GM12878 (cell line): ENCODE measurements at regions of chr16 and their contacts with region 1.

Region 1: GRCh38 chr16:66996324-66996982 is 8.1 kb downstream of the CES4A start:
- DNase-seq: no peak
- ATAC-seq: no peak
- H3K4me3 ChIP-seq: no peak overlapping the region
- H3K27ac ChIP-seq: no peak overlapping the region
- H3K4me1 ChIP-seq: no peaks in the 10 kb centered on the region; the same call in 1 of the 2 replicates
- H3K27me3 ChIP-seq: peaks cover 0 to 1% of the 10 kb centered on the region in 2 experiments; a peak in 2 of 4 replicates
- CTCF ChIP-seq: no peak
- EP300 ChIP-seq: no peak
- POLR2A ChIP-seq: no peak
- RAD21 ChIP-seq: no peak

Region 2: GRCh38 chr16:66934153-66934838 is 62.2 kb before region 1 on chr16 and contains the start of gene CIAO2B:
- CTCF ChIA-PET with region 1: no interaction called
- POLR2A ChIA-PET with region 1: no interaction called
- RAD21 ChIA-PET with region 1: no interaction called
- SMC1A ChIA-PET with region 1: no interaction called
- in situ Hi-C with region 1: loop called (anchors 10 kb)
- intact Hi-C with region 1: no loop called
- DNase-seq: peak; percentile 47
- ATAC-seq: peak; percentile 88
- H3K4me3 ChIP-seq: peak within 1 kb of the TSS; percentile 78
- H3K27ac ChIP-seq: peak within 1 kb of the TSS; percentile 94
- H3K4me1 ChIP-seq: peaks cover 7% of the 10 kb centered on the region
- H3K27me3 ChIP-seq: no peaks in the 10 kb centered on the region
- CTCF ChIP-seq: no peak
- EP300 ChIP-seq: no peak
- POLR2A ChIP-seq: peak; percentile 98
- RAD21 ChIP-seq: no peak
- polyA plus RNA-seq, gene CIAO2B: 101 to 120 TPM

Region 3: DNA sequence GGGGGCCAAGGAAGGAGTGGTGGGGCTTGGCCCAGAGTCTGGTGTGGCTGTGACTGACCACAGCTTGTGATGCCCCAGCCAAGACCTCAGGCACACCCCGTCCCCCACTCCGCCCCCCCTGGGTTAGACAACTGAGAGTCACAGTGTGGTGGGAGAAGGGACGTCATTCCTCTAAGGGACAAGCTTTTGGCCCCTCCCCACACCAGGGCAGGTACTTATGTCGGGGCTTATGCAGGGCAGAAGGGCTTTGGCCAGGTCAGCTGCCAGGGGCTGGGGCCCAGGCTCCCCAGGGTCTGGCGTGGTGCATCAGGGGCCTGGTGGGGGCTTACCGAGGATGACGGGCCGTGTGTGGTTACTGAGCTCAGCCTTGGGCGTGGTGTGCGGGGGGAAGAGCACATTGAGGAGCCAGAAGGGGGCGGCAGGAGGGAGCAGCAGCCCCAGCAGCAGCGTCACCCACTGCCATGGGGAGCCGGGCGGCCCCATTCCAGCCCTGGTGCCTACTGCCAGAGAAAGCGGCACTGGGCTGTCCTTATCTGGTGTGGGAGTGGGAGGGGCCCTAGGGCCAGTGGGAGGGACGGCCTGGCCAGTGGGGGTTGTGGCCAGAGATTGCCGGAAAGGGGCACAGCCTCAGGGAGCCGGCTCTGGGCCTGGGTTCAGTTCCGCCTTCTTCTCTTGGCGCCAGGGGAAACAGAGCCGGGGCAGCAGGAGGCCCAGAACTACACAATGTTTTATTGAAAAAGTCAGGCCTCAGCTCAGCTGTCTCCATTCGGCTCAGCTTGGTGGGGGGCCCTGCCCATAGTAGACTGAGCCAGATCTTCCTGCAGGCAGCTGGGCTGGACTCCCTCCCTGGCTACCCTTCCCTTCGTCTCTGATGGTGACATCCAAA is 947.4 kb after region 1 on chr16 and contains the start of gene LCAT:
- CTCF ChIA-PET with region 1: no interaction called
- POLR2A ChIA-PET with region 1: no interaction called
- RAD21 ChIA-PET with region 1: no interaction called
- SMC1A ChIA-PET with region 1: no interaction called
- in situ Hi-C with region 1: no loop called
- intact Hi-C with region 1: no loop called
- DNase-seq: no peak
- ATAC-seq: no peak
- H3K4me3 ChIP-seq: no peak within 1 kb of the TSS
- H3K27ac ChIP-seq: no peak within 1 kb of the TSS
- H3K4me1 ChIP-seq: peaks cover 7% of the 10 kb centered on the region
- H3K27me3 ChIP-seq: no peaks in the 10 kb centered on the region
- CTCF ChIP-seq: no peak
- EP300 ChIP-seq: no peak
- POLR2A ChIP-seq: no peak; the same call in 1 of the 2 replicates
- RAD21 ChIP-seq: no peak
- polyA plus RNA-seq, gene LCAT: 0.61 to 0.71 TPM

Region 4: DNA sequence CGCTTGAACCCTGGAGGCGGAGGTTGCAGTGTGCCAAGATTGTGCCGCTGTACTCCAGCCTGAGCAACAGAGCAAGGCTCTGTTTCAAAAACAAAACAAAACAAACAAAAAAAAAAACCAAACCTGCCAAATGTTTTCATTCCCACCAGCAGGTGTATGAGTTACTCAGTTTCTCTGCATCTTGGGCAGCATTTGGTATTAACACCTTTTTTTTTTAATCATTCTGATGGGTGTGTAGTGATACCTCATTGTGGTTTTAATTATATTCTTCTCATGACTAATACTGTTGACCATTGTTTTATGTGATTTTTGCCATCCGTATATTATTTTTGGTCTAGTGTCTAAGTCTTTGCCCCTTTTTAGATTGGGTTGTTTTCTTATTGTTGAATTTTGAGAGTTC is 1104.0 kb after region 1 on chr16:
- CTCF ChIA-PET with region 1: no interaction called
- POLR2A ChIA-PET with region 1: no interaction called
- RAD21 ChIA-PET with region 1: no interaction called
- SMC1A ChIA-PET with region 1: no interaction called
- in situ Hi-C with region 1: no loop called
- intact Hi-C with region 1: no loop called
- DNase-seq: no peak
- ATAC-seq: no peak
- H3K4me3 ChIP-seq: no peak overlapping the region
- H3K27ac ChIP-seq: no peak overlapping the region
- H3K4me1 ChIP-seq: no peaks in the 10 kb centered on the region
- H3K27me3 ChIP-seq: no peaks in the 10 kb centered on the region
- CTCF ChIP-seq: no peak
- EP300 ChIP-seq: no peak
- POLR2A ChIP-seq: no peak
- RAD21 ChIP-seq: no peak